GM12878 (cell line): ENCODE measurements at regions of chr14 and their contacts with region 1.

Region 1: DNA sequence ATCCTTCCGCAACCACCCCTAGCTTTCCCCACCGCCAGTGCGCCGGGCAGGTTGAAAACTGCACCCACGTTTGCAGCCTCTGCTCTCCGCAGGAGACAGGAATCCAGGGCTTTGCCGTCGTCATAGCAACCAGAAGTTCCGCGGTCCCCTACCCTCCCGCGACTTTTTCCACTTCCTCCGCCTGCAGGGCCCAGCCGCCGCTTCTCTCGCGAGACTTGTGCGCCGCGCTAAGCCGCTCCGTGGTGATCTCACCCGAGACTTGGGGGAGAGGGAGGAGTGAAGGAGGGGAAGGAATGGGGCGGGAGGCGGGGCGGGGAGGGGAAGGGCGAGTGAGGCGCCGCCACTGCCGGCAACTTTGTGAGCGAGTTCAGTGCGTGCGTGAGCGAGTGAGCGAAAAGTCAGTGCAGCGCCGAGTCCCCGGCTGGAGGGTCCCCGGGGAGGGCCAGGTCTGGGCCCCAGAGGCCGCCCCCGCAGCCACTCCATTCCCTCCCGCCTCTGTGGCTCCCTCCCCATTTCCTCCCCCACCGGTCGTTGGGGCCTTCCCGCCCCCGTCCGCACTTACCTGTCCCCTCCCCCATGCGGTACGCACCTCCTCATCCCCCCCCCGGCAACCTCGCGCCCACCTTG is 413.0 kb downstream of the PCNX1 start:
- DNase-seq: peak; percentile 96
- ATAC-seq: peak; percentile 79
- H3K4me3 ChIP-seq: peak within 1 kb of the TSS; percentile 98
- H3K27ac ChIP-seq: peak within 1 kb of the TSS; percentile 94
- H3K4me1 ChIP-seq: peaks cover 11% of the 10 kb centered on the region
- H3K27me3 ChIP-seq: no peaks in the 10 kb centered on the region
- CTCF ChIP-seq: no peak
- EP300 ChIP-seq: peak in 1 of 2 experiments; percentile 57; a peak in 2 of 4 replicates
- POLR2A ChIP-seq: peak; percentile 85
- RAD21 ChIP-seq: no peak

Region 2: DNA sequence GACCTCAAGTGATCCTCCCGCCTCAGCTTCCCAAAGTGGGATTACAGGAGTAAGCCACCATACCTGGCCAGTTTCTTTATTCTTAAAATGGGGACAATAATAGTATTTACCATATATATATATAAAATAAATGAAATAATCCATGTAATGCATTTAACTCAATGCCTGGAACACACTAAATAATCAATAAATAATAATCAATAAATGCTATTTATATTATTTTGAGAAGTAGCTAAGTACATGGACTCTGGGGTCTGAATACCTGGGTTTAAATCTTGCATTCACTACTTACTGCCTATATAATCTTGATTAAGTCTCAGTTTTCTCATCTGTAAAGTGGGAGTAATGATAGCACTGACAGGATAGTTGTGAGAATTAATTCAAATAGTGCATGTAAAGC is 17.4 kb before region 1 on chr14:
- CTCF ChIA-PET with region 1: no interaction called
- POLR2A ChIA-PET with region 1: no interaction called
- RAD21 ChIA-PET with region 1: no interaction called
- SMC1A ChIA-PET with region 1: no interaction called
- in situ Hi-C with region 1: no loop called
- intact Hi-C with region 1: no loop called
- DNase-seq: no peak
- ATAC-seq: no peak
- H3K4me3 ChIP-seq: no peak overlapping the region
- H3K27ac ChIP-seq: no peak overlapping the region
- H3K4me1 ChIP-seq: no peaks in the 10 kb centered on the region
- H3K27me3 ChIP-seq: no peaks in the 10 kb centered on the region
- CTCF ChIP-seq: no peak
- EP300 ChIP-seq: no peak
- POLR2A ChIP-seq: no peak
- RAD21 ChIP-seq: no peak

Region 3: GRCh38 chr14:71362920-71363584 is 42.8 kb after region 1 on chr14:
- CTCF ChIA-PET with region 1: interaction called, 12 read pairs
- POLR2A ChIA-PET with region 1: interaction called, 21 read pairs
- RAD21 ChIA-PET with region 1: interaction called, 128 read pairs
- SMC1A ChIA-PET with region 1: interaction called, 92 read pairs
- in situ Hi-C with region 1: no loop called
- intact Hi-C with region 1: no loop called
- DNase-seq: peak; percentile 53
- ATAC-seq: peak; percentile 73
- H3K4me3 ChIP-seq: no peak overlapping the region
- H3K27ac ChIP-seq: peak overlapping the region; percentile 47; the same call in 1 of the 2 replicates
- H3K4me1 ChIP-seq: peaks cover 49% of the 10 kb centered on the region
- H3K27me3 ChIP-seq: no peaks in the 10 kb centered on the region
- CTCF ChIP-seq: no peak
- EP300 ChIP-seq: peak; percentile 33 to 51; a peak in 1 of 4 replicates
- POLR2A ChIP-seq: no peak
- RAD21 ChIP-seq: no peak

Region 4: DNA sequence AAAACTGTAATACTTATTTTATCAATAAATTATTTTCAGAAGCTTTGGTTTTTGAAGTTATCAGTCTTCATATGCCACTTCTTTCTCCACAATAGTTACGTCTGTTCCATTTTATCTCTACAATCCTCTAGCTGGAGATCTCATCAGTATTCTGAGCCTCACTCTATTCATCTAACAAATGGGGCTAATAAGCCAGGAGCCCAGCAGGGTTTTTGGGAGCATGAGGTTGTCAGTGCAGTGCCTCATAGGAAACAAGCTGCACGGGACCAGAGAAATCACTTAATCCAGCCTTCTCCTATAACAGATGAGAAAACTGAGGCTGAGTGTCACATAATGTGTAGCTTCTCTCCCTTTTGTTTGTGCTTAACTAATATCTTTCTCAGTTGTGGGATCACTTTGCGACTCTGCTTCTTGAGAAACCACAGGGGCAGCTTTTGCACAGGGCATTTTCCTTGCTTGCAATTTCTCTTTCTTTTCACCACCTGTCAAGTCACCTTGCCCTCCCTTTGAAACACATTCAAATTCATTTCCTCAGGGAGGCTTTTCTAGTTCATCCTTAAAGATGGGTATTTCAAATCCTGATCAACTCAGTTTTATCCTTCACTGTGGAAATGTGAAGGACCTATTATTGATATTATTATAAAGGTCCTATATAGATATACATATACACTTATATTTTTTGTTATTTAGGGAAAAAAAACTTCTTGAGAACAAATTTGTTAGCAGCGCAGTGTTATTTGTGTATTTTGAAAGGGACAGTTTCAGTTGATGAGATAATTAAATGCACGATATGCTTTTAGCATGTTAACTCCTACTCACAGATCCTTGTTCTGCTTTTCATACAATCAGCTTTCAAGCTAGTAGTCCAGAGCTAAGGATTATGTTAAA is 110.3 kb after region 1 on chr14:
- CTCF ChIA-PET with region 1: interaction called, 11 read pairs
- POLR2A ChIA-PET with region 1: interaction called, 7 read pairs
- RAD21 ChIA-PET with region 1: interaction called, 30 read pairs
- SMC1A ChIA-PET with region 1: interaction called, 52 read pairs
- in situ Hi-C with region 1: no loop called
- intact Hi-C with region 1: loop called (anchors 10 kb)
- DNase-seq: peak; percentile 73
- ATAC-seq: peak; percentile 82
- H3K4me3 ChIP-seq: peak overlapping the region; percentile 58; the same call in 1 of the 2 replicates
- H3K27ac ChIP-seq: peak overlapping the region; percentile 84
- H3K4me1 ChIP-seq: peaks cover 33% of the 10 kb centered on the region
- H3K27me3 ChIP-seq: no peaks in the 10 kb centered on the region
- CTCF ChIP-seq: no peak
- EP300 ChIP-seq: peak; percentile 47 to 60; a peak in 3 of 4 replicates
- POLR2A ChIP-seq: no peak
- RAD21 ChIP-seq: 0 out of 2 replicates have a peak, but pooled peaks have one; percentile 6

Region 5: GRCh38 chr14:71478542-71478941 is 158.3 kb after region 1 on chr14:
- CTCF ChIA-PET with region 1: no interaction called
- POLR2A ChIA-PET with region 1: interaction called, 5 read pairs
- RAD21 ChIA-PET with region 1: interaction called, 6 read pairs
- SMC1A ChIA-PET with region 1: interaction called, 48 read pairs
- in situ Hi-C with region 1: no loop called
- intact Hi-C with region 1: no loop called
- DNase-seq: no peak
- ATAC-seq: peak; percentile 54
- H3K4me3 ChIP-seq: 0 out of 2 replicates have a peak overlapping the region, but pooled peaks have one; percentile 10
- H3K27ac ChIP-seq: peak overlapping the region; percentile 78
- H3K4me1 ChIP-seq: peaks cover 35% of the 10 kb centered on the region
- H3K27me3 ChIP-seq: no peaks in the 10 kb centered on the region
- CTCF ChIP-seq: no peak
- EP300 ChIP-seq: no peak
- POLR2A ChIP-seq: no peak
- RAD21 ChIP-seq: no peak

Region 6: GRCh38 chr14:71591929-71592328 is 271.7 kb after region 1 on chr14:
- CTCF ChIA-PET with region 1: interaction called, 7 read pairs
- POLR2A ChIA-PET with region 1: interaction called, 4 read pairs
- RAD21 ChIA-PET with region 1: interaction called, 16 read pairs
- SMC1A ChIA-PET with region 1: interaction called, 9 read pairs
- in situ Hi-C with region 1: no loop called
- intact Hi-C with region 1: no loop called
- DNase-seq: no peak
- ATAC-seq: peak; percentile 91
- H3K4me3 ChIP-seq: no peak overlapping the region
- H3K27ac ChIP-seq: peak overlapping the region; percentile 61
- H3K4me1 ChIP-seq: peaks cover 13% of the 10 kb centered on the region
- H3K27me3 ChIP-seq: no peaks in the 10 kb centered on the region
- CTCF ChIP-seq: no peak
- EP300 ChIP-seq: no peak
- POLR2A ChIP-seq: no peak
- RAD21 ChIP-seq: no peak

Region 7: DNA sequence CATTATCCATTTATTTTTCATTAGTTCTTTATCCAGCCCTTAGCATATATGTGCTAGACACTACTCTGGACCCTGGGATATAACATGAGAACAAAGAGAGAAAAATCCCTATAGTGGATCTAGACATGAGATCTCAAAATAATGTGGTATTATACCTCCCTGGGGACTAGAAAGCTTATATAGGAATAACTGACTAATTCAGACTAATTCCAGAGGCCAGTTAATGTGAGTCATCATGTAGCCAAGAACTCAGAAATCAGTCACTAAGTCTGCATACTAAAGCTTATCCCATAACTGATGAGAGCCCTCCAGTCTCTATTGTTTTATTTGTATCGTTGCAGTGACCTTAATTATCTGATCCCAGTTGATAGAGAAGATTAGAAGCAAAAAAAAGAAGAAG is 344.9 kb after region 1 on chr14:
- CTCF ChIA-PET with region 1: interaction called, 4 read pairs
- POLR2A ChIA-PET with region 1: interaction called, 4 read pairs
- RAD21 ChIA-PET with region 1: interaction called, 4 read pairs
- SMC1A ChIA-PET with region 1: interaction called, 4 read pairs
- in situ Hi-C with region 1: no loop called
- intact Hi-C with region 1: loop called (anchors 10 kb)
- DNase-seq: no peak
- ATAC-seq: no peak
- H3K4me3 ChIP-seq: no peak overlapping the region
- H3K27ac ChIP-seq: no peak overlapping the region
- H3K4me1 ChIP-seq: no peaks in the 10 kb centered on the region
- H3K27me3 ChIP-seq: no peaks in the 10 kb centered on the region
- CTCF ChIP-seq: no peak
- EP300 ChIP-seq: no peak
- POLR2A ChIP-seq: no peak
- RAD21 ChIP-seq: no peak

Region 8: DNA sequence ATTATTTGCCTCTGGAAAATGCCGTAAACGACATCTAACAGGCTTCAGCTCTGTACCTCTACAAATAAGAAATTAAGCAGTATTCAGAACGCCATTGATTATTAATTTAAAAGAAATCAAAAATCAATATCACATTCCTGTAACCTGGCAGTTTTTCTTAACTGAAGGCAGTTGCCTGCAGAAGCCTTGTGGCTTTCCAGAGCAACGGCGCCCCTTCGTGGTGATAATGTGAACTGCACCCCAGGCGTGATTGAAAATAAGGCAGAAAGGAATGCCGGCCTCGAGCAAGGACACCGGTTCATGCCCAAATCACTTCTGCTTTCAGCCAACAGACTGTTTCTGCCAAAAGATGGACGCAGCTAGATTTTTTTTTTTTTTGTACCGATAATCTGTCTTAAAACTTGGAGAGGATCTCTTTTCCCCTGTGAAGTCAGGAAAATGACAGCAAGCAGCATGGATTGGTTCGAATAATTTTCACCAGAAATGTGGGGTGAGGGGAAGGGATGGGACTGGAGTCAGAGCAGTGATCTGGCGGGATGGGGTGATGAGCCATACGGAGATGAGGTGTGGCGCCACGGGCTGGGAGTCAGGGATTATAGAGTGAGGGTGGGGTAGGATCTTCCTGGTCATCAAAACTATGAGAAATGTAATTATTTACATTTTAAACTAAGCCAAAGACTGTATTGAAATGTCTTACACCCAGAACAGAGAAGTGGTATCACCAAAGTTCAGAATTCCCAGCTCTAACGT is 1100.7 kb after region 1 on chr14:
- CTCF ChIA-PET with region 1: no interaction called
- POLR2A ChIA-PET with region 1: no interaction called
- RAD21 ChIA-PET with region 1: no interaction called
- SMC1A ChIA-PET with region 1: no interaction called
- in situ Hi-C with region 1: no loop called
- intact Hi-C with region 1: no loop called
- DNase-seq: peak; percentile 49
- ATAC-seq: peak; percentile 83
- H3K4me3 ChIP-seq: no peak overlapping the region
- H3K27ac ChIP-seq: no peak overlapping the region
- H3K4me1 ChIP-seq: no peaks in the 10 kb centered on the region
- H3K27me3 ChIP-seq: no peaks in the 10 kb centered on the region
- CTCF ChIP-seq: peak; percentile 91 to 97 (median 95)
- EP300 ChIP-seq: no peak
- POLR2A ChIP-seq: no peak
- RAD21 ChIP-seq: peak; percentile 99